Activated naive CD4-positive, alpha-beta T cell treated with anti-CD3 and anti-CD28 coated beads for 36 hours (primary cell): ENCODE measurements at regions of chr17 and their contacts with region 1.

Region 1: GRCh38 chr17:1399679-1400512 is at the start of gene YWHAE:
- DNase-seq: peak; percentile 98
- H3K4me3 Mint-ChIP-seq: peak within 1 kb of the TSS; percentile 99
- H3K27ac Mint-ChIP-seq: peak within 1 kb of the TSS; percentile 100
- H3K4me1 Mint-ChIP-seq: peaks cover 32% of the 10 kb centered on the region
- H3K27me3 Mint-ChIP-seq: no peaks in the 10 kb centered on the region
- total RNA-seq, gene YWHAE: 528 to 576 TPM

Region 2: DNA sequence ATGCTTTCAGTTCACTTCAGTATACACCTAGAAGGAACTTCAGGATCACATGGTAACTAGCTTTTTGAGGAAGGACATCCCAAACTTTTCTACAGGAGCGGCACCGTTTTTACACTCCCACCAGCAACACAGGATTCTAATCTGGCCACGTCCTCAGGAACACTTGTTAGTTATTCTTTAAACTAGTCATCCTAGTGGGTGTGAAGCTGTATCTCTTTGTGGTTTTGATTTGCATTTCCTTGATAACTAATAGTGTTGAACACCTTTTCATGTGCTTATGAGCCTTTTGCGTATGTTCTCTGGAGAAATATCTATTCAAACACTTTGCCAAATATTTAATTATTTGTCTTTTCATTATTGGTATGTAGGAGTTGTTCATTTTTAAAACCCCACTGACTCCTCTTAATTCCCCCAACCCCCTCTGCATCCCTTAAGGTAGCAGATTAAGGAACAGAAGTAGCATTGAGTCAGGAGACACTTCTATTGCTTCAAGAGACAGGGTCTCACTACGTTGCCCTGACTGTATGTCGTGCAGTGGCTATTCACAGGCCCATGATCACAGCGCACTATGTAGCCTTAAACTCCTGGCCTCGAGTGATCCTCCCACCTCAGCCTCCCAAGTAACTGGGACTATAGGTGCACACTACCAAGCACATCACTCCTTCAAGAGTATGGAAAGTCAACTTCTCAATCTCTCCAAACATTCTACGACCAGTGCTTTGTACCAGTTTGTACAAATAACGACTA is 25.3 kb before region 1 on chr17:
- CTCF ChIA-PET with region 1: interaction called, 4 read pairs
- intact Hi-C with region 1: loop called (anchors 2 kb)
- DNase-seq: no peak
- H3K4me3 Mint-ChIP-seq: peak overlapping the region; percentile 3
- H3K27ac Mint-ChIP-seq: peak overlapping the region; percentile 79
- H3K4me1 Mint-ChIP-seq: peaks cover 80% of the 10 kb centered on the region
- H3K27me3 Mint-ChIP-seq: no peaks in the 10 kb centered on the region

Region 3: GRCh38 chr17:1379930-1380313 is 20.0 kb before region 1 on chr17:
- CTCF ChIA-PET with region 1: interaction called, 4 read pairs
- intact Hi-C with region 1: loop called (anchors 1 kb)
- DNase-seq: peak; percentile 72
- H3K4me3 Mint-ChIP-seq: peak overlapping the region; percentile 1
- H3K27ac Mint-ChIP-seq: peak overlapping the region; percentile 80
- H3K4me1 Mint-ChIP-seq: peaks cover 81% of the 10 kb centered on the region
- H3K27me3 Mint-ChIP-seq: no peaks in the 10 kb centered on the region

Region 4: GRCh38 chr17:1447052-1447451 is 47.2 kb after region 1 on chr17:
- CTCF ChIA-PET with region 1: no interaction called
- intact Hi-C with region 1: no loop called
- DNase-seq: no peak
- H3K4me3 Mint-ChIP-seq: no peak overlapping the region
- H3K27ac Mint-ChIP-seq: no peak overlapping the region
- H3K4me1 Mint-ChIP-seq: peaks cover 38% of the 10 kb centered on the region
- H3K27me3 Mint-ChIP-seq: no peaks in the 10 kb centered on the region